Cardiac septum (tissue), 1 donor: ENCODE measurements at regions of chr5 and their contacts with region 1.

Region 1: DNA sequence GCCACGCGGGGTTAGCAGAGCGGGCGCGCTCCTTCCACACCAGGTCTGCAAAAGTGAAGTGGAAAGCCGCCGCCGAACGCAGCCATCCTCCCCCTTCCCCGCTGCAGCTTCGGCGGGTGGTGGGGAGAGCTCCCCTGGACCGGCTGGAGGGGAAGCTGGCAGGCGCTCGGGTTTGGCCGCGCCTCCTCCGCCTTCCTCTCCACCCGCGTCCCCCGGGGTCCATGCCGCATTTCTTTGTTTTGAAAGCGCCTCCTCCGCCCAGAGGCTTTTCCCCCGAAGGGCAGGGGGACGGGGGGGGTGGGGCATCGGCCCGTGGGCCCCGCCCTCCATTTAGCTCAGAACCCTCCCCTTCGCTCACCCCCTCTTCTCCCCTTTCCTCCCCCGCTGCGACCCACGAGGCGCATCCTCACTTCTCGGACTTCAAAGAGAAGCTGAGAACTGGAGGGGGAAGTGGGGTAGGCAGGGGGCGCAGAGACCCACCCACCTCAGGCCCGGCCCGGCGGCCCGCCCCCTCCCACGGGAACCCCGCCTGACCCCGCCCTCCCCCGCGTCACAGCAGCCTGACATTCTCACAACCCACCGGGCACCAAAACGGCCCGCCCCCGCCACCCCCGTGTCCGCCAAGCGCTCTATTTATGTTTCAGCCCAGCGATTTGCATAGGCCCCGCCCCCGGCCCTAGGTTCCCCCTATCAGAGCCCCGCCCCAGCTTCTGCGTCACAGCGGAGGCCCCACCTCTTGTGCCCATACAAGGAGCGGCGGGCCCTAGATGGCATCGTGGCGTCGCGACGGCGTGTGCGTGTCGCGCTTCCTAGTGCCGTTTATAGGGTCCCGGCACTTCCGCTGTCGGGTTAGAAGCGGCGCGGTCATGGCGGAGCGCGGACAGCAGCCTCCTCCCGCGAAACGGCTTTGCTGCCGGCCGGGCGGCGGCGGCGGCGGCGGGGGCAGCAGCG is at the start of gene ZSWIM6:
- DNase-seq: peak; percentile 100
- total RNA-seq, gene ZSWIM6: 6.7 TPM

Region 2: DNA sequence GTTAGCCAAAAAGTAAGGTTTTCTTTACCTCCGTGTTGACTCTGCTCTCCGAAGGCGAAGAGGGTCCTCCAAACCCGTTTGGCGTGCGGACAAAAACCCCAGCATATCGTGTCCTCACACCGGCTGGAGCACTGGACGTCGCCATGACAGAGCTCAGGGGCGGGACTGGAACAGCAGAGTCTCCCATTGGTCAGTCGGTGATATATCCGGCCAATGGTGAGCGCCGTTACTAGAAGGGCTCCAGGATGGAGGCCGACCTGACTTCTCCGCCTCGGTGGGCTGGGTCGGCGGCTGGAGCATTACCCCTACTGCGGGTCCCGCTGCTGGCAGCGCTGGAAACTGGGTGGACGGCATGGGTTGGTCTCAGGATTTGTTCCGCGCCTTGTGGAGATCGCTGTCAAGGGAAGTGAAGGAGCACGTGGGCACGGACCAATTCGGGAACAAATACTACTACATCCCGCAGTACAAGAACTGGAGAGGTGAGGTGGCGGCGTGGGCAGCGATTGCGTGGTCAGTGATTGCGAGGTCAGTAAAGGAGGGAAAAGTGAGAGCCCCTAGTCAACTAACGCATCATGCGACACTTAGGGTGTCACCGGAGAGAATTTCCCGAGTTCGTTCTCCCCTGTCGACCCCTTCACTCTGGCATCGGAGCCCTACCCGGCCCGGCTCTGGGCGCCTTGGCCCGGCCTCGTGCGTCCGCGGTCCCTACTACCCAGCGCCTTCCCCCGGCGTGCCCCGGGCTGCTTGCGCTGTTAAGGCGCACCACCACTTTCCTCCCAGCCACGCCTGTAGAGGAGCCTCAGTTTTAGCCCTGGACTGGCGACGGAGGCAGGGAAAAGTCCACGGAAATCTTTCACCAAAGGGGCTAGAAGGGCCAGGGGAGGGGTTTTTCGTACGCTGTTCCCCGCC is 386.5 kb before region 1 on chr5 and contains the starts of genes ERCC8 and NDUFAF2:
- intact Hi-C with region 1: loop called (anchors 5 kb)
- DNase-seq: peak; percentile 97
- total RNA-seq, gene ERCC8: 4.6 TPM
- total RNA-seq, gene NDUFAF2: 27.1 TPM

Region 3: GRCh38 chr5:61055434-61056006 is 276.2 kb before region 1 on chr5:
- intact Hi-C with region 1: loop called (anchors 10 kb)
- DNase-seq: no peak

Region 4: GRCh38 chr5:61162010-61162831 is 169.5 kb before region 1 on chr5 and contains the start of gene SMIM15:
- intact Hi-C with region 1: loop called (anchors 5 kb)
- DNase-seq: peak; percentile 95
- total RNA-seq, gene SMIM15: 20.0 TPM

Region 5: GRCh38 chr5:61408476-61409168 is 76.9 kb after region 1 on chr5:
- intact Hi-C with region 1: loop called (anchors 2 kb)
- DNase-seq: peak; percentile 100

Region 6: DNA sequence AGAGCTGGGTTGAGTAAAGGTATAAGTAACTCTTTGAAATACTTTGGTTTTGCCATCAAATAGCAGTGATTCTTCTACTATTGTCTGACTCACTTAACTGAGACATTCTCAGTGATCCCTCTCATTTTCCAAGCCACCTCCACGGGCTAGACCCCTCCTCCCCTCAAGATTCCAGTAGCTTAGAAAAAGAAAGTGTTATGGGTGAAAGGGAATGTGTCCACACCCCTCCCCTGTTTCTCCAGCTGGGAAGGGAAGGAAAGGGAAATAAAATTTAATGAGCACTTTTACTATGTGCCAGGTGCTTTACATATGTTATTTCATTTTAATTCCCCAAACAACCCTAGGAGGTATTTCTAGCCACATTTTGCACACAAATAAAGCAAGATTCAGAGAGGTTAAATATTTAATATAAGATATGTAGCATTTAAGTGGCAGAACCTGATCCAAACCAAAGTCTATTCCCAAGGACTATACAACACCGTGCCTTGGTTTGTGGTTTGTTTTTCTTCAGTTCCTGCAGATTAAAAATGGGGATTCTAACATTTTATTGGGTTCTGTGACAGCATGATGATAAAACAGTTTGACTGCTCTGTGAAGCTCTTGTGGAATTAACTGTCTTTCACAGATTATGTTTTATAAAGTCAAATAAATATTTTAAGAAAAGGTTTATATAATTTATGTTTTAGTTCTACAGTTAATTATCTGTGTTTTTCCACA is 136.2 kb after region 1 on chr5:
- intact Hi-C with region 1: no loop called
- DNase-seq: no peak

Region 7: GRCh38 chr5:61625681-61626621 is 294.3 kb after region 1 on chr5:
- intact Hi-C with region 1: loop called (anchors 2 kb)
- DNase-seq: peak; percentile 89

Region 8: DNA sequence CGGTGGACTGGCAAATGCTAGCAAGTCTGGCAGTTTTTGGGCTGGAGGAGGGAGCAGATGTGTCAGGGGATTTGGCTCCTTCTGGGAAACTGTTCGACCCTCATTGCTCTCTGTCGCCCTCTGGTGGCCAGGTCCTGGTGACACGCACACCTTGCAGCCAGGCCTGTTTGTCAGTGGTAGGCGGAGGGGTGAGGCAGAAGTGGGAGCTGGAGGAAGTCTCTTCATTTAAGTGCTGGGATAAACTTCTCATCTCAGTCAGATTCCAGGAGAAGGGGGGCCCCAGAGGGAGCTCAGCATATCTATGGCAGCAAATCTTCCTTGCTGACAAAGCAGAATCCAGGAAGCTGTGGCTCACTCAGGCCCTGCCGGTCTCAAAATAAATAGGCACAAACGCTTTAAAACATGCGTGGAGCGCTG is 326.9 kb after region 1 on chr5:
- intact Hi-C with region 1: loop called (anchors 2 kb)
- DNase-seq: peak; percentile 92